Activated T-helper 1 cell treated with anti-CD3 and anti-CD28 coated beads, Interleukin-12 subunit alpha, Interleukin-12 subunit beta, Interleukin-2, Interleukin-4 antibody, amounts not matched to agents 30 ng/mL and 10 ng/mL and 1 ng/mL, durations not matched to agents 14 hours and 24 hours and 36 hours (primary cell): ENCODE measurements at regions of chr5 and their contacts with region 1.

Region 1: DNA sequence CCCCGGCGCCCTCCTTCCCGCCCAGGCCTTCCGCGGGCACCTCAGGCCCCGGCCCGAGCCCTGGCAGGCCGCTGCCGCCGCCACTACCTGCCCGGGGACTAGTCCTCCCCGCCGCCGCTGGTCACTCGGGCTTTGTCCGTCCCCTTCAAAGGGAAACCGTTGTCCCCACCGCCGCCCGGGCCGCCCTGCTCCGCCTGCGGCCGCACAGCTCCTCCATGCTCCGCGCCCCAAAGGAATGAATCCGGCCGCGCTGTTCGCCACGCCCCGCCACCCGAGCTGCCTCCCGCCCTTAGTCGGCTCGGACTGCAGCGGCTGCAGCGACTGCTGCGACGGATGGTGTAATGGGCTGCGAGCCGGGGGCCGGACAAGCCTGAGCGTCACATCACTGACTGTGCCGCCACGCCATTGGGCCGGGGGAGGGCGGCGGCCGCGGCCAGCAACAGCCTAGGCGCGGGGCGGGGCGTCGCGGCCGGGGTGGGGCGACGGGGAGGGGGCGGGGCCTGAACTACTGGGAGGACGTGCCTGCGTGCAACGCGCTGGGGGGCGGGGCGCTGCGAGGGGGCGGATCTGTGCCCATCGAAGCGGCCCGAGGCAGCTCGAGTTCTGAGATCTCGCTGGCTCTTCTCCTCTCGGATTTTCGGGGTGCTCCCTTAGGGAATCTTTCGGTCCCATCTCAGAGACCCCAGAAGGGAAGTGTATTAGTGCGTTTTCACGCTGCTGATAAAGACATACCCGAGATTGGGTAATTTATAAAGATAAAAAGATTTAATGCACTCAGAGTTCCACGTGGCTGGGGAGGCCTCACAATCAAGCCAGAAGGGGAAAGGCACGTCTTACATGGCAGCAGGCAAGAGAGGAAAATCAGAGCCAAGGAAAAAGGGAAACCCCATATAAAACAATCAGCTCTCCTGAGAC is at the start of gene FEM1C:
- DNase-seq: peak; percentile 88
- H3K4me3 Mint-ChIP-seq: peak within 1 kb of the TSS; percentile 99
- H3K27ac Mint-ChIP-seq: peak within 1 kb of the TSS; percentile 100
- H3K4me1 Mint-ChIP-seq: peaks cover 45% of the 10 kb centered on the region
- H3K27me3 Mint-ChIP-seq: no peaks in the 10 kb centered on the region
- total RNA-seq, gene FEM1C: 13.9 and 14.5 TPM in 2 replicates

Region 2: GRCh38 chr5:115209279-115209678 is 335.4 kb before region 1 on chr5:
- intact Hi-C with region 1: loop called (anchors 1 kb)
- DNase-seq: peak; percentile 59
- H3K4me3 Mint-ChIP-seq: no peak overlapping the region
- H3K27ac Mint-ChIP-seq: peak overlapping the region; percentile 28
- H3K4me1 Mint-ChIP-seq: peaks cover 17% of the 10 kb centered on the region
- H3K27me3 Mint-ChIP-seq: no peaks in the 10 kb centered on the region

Region 3: DNA sequence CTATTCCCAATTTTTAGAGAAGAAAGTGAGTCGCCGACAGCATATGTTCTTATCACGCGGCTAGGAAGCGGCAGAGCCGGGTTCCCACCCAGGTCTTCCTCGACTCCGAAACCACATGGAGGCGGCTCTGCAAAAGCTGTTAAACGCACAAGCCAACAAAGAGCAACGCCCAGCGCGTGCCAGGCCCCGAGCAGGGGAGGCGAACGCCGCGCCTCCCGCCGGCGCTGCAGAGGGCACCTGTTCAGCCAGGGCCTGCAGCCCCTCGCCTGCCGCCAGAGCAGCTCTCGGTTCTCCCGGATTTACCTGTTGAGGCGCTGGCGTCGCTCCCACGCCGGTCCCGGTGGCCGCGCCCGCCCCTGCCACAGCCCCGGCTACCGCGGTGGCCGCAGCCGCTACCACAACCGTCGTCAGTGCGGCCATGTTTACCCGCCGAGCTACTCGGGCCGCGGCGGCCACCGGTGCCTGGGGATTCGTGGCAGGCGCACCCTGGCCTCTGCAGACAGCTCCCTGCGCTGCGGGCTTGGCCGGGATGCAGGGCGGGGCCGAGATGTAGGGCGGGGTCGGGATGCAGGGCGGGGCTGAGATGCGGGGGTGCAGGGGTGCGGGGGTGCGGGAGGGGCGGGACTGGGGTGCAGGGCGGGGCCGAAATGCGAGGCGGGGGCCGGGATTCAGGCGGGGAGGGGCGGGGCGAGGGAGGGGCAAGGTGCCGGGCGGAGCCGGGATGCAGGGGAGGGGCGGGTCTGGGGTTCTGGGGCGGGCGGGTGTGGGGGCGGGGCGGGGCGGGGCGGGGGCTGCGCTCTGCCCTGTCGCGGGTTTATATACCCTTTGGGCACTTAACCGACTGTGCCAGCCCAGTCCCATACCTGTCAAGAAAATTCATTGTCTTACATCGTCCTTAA is 248.3 kb before region 1 on chr5 and contains the start of gene CCDC112:
- intact Hi-C with region 1: loop called (anchors 1 kb)
- DNase-seq: peak; percentile 51
- H3K4me3 Mint-ChIP-seq: peak within 1 kb of the TSS; percentile 77
- H3K27ac Mint-ChIP-seq: no peak within 1 kb of the TSS
- H3K4me1 Mint-ChIP-seq: peaks cover 9% of the 10 kb centered on the region
- H3K27me3 Mint-ChIP-seq: peaks cover 53% of the 10 kb centered on the region
- total RNA-seq, gene CCDC112: 0.22 and 0.29 TPM in 2 replicates

Region 4: DNA sequence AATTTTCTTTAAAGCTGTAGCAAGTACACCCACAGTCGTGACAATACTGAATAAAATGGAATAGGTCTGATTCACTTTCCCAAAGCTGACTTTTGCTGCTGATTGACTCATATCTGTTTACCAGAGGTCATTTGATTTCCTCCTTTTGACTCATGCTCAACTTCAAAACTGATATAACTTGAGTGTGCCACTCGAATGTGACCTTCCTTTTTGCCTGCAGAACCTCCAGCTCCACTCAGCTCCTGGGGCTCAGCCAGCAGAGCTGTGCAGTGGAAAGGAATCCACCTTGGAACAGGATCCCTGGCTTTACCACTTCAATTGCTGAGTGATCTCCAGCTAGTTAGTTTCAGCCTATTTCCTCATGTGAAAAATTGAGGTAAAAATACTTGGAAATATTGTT is 84.2 kb before region 1 on chr5:
- intact Hi-C with region 1: loop called (anchors 1 kb)
- DNase-seq: no peak
- H3K4me3 Mint-ChIP-seq: no peak overlapping the region
- H3K27ac Mint-ChIP-seq: no peak overlapping the region
- H3K4me1 Mint-ChIP-seq: peaks cover 4% of the 10 kb centered on the region
- H3K27me3 Mint-ChIP-seq: peaks cover 17% of the 10 kb centered on the region

Region 5: GRCh38 chr5:115532517-115532916 is 12.2 kb before region 1 on chr5:
- intact Hi-C with region 1: loop called (anchors 1 kb)
- DNase-seq: no peak
- H3K4me3 Mint-ChIP-seq: no peak overlapping the region
- H3K27ac Mint-ChIP-seq: no peak overlapping the region
- H3K4me1 Mint-ChIP-seq: peaks cover 65% of the 10 kb centered on the region
- H3K27me3 Mint-ChIP-seq: no peaks in the 10 kb centered on the region

Region 6: GRCh38 chr5:115601701-115602590 is 57.3 kb after region 1 on chr5 and contains the start of gene TICAM2:
- intact Hi-C with region 1: loop called (anchors 1 kb)
- DNase-seq: peak; percentile 65
- H3K4me3 Mint-ChIP-seq: peak within 1 kb of the TSS; percentile 65
- H3K27ac Mint-ChIP-seq: peak within 1 kb of the TSS; percentile 80
- H3K4me1 Mint-ChIP-seq: peaks cover 35% of the 10 kb centered on the region
- H3K27me3 Mint-ChIP-seq: no peaks in the 10 kb centered on the region
- total RNA-seq, gene TICAM2: 0.59 and 1.1 TPM in 2 replicates

Region 7: DNA sequence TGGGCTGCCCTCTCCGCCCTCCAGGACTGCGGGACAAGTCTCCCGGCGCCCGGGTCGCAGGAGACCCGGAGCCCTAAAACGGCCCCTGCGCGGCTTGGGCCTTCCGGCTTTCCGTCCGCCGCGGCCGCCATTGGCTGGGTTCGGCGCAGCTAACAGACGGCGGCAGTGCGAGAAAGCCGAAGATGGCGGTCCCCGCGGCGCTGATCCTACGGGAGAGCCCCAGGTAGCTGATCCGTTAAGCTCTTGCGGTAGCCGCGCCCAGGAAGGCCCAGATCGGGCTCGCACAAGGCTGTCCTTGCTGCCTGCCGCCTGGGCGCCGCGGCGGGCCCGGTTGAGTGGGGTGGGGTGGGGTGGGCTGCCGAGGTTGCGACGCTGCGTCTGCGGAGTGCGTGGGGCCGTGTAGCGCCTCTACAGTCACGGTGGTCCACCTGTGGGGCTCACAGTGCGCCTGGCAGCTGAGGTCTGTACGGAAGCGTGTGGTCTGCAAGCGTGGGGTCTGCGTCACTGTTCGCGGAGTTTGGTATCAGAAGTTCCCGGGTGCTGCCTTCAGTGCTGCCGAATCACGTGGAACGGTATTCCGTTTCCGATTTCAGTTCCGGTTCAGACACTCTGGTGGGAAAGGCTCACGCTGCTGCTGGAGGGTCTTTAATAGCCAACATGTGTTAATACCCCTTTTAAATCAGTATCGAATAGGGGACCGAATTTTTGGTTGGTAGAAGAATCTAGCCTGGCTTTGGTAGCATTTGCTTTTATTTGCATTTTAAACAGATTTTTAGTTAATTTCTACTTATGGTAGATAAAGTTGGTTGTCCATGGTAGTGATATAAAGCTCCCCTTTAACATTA is 540.4 kb after region 1 on chr5 and contains the start of gene COMMD10:
- intact Hi-C with region 1: loop called (anchors 2 kb)
- DNase-seq: peak; percentile 72
- H3K4me3 Mint-ChIP-seq: peak within 1 kb of the TSS; percentile 89
- H3K27ac Mint-ChIP-seq: peak within 1 kb of the TSS; percentile 86
- H3K4me1 Mint-ChIP-seq: peaks cover 30% of the 10 kb centered on the region
- H3K27me3 Mint-ChIP-seq: peaks cover 4% of the 10 kb centered on the region
- total RNA-seq, gene COMMD10: 21.8 and 23.6 TPM in 2 replicates